ENCODE measurements at regions of chr7 and their contacts with region 1.

Region 1: DNA sequence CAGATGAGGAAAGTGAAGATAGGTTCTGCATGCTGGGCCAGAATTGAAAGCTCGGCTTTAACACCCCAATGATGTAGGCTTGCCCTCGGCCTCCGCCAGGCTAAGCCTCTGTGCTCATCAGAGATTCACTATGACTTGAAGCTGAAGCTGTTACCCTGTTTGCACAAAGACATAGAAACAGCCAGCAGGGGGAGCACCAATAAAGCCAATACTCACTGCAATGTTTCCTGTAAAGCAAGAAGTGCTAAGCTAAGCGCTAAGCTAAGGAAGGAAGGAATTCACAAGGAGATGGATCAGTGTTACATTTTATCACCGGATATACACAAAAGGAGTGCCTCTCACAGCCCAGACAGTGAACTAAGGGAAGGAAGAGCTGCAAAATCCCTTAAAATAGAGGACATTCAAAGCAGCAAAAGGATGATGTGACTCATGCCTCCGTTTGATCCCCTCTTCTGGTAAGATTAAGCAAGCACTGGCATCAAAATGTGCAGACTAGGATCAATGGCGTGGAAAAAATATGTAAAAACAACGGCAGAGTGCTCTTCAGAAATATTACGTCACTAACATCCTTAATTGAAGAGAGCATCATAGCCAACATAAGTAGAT is 153.8 kb downstream of the COBL start:
- DNase-seq: peak; percentile 26
- H3K4me3 ChIP-seq: no peak overlapping the region
- H3K27ac ChIP-seq: no peak overlapping the region
- H3K27me3 ChIP-seq: peaks cover 6% of the 10 kb centered on the region
- CTCF ChIP-seq: peak; percentile 93

Region 2: DNA sequence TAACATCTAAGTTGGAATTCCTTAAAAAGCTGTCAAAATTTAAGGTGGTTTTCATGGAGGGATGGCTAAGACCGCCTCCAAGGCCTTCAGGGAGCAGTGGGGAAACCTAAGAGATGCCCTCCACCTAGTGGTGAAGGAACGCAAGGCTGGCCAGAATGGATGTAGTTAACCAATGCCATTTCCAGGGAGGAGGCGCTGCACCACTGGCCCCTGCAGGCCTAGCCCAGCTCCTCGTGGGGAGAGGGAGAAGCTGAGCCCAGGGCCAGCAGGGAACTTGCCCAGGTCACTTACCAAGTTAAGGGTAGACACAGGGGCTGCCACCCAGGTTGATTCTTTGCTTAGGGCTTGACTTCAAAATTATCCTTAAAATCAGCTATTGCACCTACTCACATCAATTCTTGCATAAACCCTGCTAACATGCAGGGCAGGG is 744.7 kb before region 1 on chr7:
- CTCF ChIA-PET with region 1: interaction called, 10 read pairs
- POLR2A ChIA-PET with region 1: no interaction called
- DNase-seq: peak; percentile 36
- H3K4me3 ChIP-seq: no peak overlapping the region
- H3K27ac ChIP-seq: no peak overlapping the region
- H3K27me3 ChIP-seq: peaks cover 3% of the 10 kb centered on the region
- CTCF ChIP-seq: peak; percentile 96

Region 3: DNA sequence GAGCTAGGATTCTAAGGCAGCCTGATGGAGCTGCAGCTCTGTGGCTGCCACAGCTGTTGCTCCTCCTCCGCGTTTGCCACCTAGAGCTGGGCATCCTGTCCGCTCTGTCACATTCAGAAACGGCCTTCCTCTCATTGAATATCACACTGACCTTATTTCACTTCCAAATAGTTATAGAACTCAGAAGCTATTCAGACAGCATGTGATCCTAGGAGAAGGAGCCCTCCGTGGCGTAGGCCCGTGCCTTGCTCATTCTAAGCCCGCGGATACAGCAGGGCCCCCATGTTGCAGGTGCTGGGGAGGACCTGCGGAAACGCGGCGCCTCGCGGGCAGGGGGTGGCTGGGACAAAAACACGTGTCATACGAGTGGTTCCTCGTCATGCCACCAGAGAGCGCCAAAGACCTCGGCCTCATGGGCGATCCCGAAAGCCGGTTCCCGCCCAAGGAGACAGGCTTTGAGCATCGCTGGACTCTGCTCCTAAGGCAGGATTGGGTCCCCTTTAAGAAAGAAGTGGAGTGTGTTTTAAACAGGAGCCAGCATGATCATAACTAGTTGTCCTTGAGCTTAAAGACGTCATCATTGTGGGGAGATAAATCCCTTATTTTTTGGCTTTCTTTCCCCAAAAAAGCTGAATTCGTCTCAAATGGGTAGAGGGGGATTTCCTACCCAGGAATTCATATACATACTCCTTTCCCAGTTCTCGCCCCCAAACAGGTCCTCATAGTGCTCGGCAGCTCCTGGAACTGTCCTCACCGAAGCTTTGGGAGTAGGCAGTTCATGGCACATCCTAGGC is 694.8 kb before region 1 on chr7:
- CTCF ChIA-PET with region 1: interaction called, 169 read pairs
- POLR2A ChIA-PET with region 1: no interaction called
- DNase-seq: peak; percentile 24
- H3K4me3 ChIP-seq: no peak overlapping the region
- H3K27ac ChIP-seq: no peak overlapping the region
- H3K27me3 ChIP-seq: peaks cover 15% of the 10 kb centered on the region
- CTCF ChIP-seq: peak; percentile 88

Region 4: DNA sequence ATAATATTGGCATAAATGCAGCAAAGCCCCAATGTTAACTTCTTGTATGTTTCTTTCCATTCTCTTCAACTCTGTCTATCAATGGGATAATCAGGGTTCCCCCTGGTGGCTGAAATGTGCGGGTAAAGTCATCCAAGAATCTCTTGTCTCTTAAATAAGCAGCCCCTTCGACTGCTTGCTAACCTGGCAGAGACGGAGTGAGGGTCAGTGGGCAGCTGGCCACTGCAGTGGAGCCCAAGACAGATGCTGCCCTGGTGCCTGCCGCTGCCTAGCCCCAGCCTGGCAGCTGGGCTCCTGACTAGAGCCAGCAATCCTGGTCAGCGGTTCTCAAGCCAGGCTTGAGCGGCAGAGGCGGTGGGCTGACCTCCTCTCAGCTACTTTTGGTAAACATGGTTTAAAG is 95.1 kb before region 1 on chr7:
- CTCF ChIA-PET with region 1: interaction called, 12 read pairs
- POLR2A ChIA-PET with region 1: no interaction called
- DNase-seq: peak; percentile 45
- H3K4me3 ChIP-seq: no peak overlapping the region
- H3K27ac ChIP-seq: no peak overlapping the region
- H3K27me3 ChIP-seq: peaks cover 12% of the 10 kb centered on the region
- CTCF ChIP-seq: peak; percentile 83

Region 5: GRCh38 chr7:51182636-51183166 is 19.9 kb after region 1 on chr7:
- CTCF ChIA-PET with region 1: interaction called, 32 read pairs
- POLR2A ChIA-PET with region 1: no interaction called
- DNase-seq: no peak
- H3K4me3 ChIP-seq: no peak overlapping the region
- H3K27ac ChIP-seq: no peak overlapping the region
- H3K27me3 ChIP-seq: no peaks in the 10 kb centered on the region
- CTCF ChIP-seq: no peak

Region 6: GRCh38 chr7:51366930-51367613 is 204.2 kb after region 1 on chr7:
- CTCF ChIA-PET with region 1: interaction called, 28 read pairs
- POLR2A ChIA-PET with region 1: no interaction called
- DNase-seq: no peak
- H3K4me3 ChIP-seq: no peak overlapping the region
- H3K27ac ChIP-seq: no peak overlapping the region
- H3K27me3 ChIP-seq: no peaks in the 10 kb centered on the region
- CTCF ChIP-seq: peak; percentile 44; the same call in 1 of the 2 replicates